AG04449 (cell line): ENCODE measurements at regions of chr6 and their contacts with region 1.

Region 1: DNA sequence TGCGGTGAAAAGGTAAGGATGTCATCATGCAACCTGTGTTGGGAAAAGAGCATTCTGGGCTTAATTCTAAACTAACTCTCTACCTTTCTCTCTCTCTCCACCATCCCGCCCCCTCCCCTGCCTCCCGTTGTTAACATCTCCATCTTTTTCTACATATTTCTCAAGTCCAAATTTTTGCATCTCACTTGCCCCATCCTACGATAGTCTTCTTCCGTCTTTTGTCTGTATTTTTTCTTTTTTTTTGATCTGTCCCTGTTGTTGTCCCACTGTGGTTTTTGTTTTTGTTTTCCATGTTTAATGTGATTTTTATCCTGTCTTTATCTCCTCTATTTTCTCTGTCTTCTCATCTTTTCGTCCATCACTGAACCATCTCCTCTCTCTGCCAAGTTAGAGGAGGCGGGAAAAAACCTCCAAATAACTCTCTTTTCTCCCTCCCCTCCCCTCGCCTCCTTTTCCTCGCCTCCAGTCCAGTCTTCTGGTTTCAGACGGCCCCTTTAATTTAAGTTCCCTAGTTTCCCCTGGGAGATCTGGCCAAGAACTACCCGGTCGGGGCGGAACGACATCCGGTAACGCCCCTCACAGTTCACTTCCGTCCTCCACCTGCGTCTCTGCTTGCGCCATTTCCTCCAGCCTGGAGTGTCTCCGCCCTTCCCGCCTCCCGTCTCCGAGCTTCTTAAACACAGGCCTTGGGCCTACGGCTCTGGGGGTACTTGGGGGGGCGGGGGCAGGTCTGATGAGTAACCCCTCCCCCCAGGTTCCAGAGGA is at the start of gene NFKBIL1:
- DNase-seq: peak; percentile 85
- H3K4me3 ChIP-seq: peak within 1 kb of the TSS; percentile 64
- CTCF ChIP-seq: no peak

Region 2: DNA sequence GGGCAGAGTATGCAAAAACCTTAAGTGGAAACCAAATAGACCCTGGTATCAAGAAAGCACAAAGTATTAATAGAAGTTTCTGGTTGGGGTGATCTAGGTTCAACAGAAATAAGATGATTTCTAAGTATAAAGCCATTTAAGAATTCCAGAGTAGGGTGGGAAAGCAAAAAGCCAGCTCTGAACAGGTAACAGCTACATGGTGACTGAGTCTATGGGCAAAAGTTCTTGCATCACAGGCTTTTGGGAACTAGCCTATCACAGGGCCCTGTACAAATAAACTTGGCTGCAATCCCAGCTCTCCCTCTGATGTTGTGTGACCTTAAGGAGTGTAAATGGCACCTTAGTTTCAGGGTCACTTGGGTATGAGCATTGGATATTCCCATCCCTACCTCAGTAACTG is 383.2 kb before region 1 on chr6:
- CTCF ChIA-PET with region 1: no interaction called
- POLR2A ChIA-PET with region 1: no interaction called
- DNase-seq: no peak
- H3K4me3 ChIP-seq: no peak overlapping the region
- CTCF ChIP-seq: no peak

Region 3: DNA sequence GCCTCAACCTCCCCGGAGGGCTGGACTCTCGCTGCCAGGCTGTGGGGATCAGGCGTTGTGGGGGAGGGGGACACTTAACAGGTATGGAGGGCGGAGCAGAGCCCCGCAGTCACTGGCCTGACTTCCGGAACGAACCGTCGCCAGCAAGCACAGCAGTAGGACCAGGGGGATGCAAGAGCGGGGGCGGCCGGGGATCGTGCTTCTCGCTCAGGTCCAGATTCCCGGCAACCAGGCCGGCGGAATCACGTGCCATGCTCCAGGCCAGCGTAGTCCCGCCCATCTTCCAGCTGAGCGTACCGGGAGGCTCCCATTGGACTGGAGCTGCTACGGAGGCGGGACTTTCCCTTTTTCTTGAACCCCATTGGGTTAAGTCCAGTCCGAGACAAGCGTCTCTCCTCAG is 366.6 kb before region 1 on chr6:
- CTCF ChIA-PET with region 1: no interaction called
- POLR2A ChIA-PET with region 1: no interaction called
- DNase-seq: no peak
- H3K4me3 ChIP-seq: peak overlapping the region; percentile 53
- CTCF ChIP-seq: no peak

Region 4: GRCh38 chr6:31558631-31559500 is 11.7 kb after region 1 on chr6:
- CTCF ChIA-PET with region 1: interaction called, 17 read pairs
- POLR2A ChIA-PET with region 1: interaction called, 3 read pairs
- DNase-seq: no peak
- H3K4me3 ChIP-seq: no peak overlapping the region
- CTCF ChIP-seq: no peak

Region 5: DNA sequence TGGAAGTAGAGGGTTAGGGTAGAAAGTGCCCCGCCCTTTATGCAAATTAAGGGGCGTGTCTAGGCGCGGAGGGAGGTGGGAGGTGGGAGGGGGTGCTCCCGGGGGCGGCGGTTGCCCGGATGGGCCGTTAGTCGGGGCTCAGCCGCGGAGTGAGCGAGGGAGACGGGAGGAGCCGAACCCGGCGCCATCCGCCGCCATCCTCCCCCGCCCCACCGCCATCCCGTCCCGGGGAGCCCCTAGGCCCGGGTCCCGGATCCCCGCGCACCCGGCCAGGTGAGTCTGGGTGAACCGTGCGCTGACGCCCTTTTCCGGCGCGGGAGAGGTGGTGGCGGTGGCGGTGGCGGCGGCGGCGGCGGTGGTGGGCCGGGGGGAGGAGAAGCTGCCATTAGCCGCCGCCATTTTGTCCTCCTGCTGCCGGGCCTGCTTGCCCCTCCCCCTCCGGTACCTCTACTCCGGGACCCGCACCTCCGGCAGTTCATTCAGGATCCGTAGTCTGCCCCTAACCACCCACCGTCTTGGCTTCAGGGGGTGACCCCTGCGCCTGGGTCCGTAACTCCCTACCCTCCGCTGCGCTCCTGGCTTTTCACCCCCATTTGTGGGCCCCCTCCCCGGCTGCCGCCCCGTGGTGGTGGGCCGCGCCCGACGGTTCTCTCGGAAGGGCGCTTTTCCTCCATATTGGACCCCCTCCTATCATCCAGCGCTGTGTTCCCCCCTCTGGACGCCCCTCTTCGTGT is 73.6 kb after region 1 on chr6 and contains the start of gene PRRC2A:
- CTCF ChIA-PET with region 1: interaction called, 17 read pairs
- POLR2A ChIA-PET with region 1: interaction called, 3 read pairs
- DNase-seq: no peak
- H3K4me3 ChIP-seq: peak within 1 kb of the TSS; percentile 97
- CTCF ChIP-seq: no peak